CD8-positive, alpha-beta memory T cell (primary cell): ENCODE measurements at regions of chr16 and their contacts with region 1.

Region 1: DNA sequence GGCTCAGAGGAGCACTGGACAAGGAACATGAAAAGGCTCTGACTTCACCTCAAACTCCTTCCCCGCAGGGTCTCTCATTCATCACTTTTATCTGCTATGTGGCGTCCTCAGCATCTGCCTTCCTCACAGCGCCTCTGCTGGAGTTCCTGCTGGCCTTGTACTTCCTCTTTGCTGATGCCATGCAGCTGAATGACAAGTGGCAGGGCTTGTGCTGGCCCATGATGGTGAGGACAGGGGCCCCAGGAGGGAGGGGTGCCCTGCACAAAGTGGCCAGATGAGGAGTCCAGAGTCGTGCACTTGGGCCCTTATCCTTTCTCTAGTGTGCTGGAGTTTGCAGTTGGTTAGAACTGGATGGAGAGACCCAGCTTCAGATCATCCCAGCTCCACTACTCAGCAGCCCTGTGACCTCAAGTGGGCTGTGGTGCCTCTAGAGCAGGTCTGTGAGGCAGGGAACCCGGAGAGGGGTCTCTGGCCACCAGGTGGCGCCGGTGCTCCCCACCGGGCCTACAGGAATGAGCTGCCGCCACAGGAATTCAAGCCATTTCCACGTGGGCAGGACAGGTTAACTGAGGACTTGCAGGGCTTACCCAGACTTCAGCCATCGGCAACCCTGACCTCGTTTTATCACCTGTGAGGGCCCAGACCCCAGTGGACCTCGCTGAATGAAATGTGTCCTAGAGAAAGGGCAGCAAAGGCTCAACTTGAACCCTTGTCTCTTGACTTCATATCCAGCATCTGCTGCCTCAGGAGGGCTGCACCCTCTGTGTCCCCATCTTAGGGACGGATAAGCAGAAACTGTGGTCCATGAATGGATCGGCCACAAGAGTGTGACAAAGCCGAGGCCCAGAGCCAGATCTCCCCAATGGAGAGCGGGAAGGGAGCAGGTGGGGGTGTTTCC is 4.0 kb downstream of the CMTM3 start:
- DNase-seq: peak; percentile 69 to 85 (median 74)
- H3K4me3 ChIP-seq: no peak overlapping the region
- H3K4me3 Mint-ChIP-seq: peak overlapping the region in 4 of 7 donors; percentile 42 to 67 (median 45)
- H3K27ac ChIP-seq: no peak overlapping the region
- H3K27ac Mint-ChIP-seq: peak overlapping the region; percentile 30 to 93 (median 72)
- H3K4me1 ChIP-seq: peaks cover 33% of the 10 kb centered on the region
- H3K4me1 Mint-ChIP-seq: peaks cover 31 to 43% (median 33%) of the 10 kb centered on the region in 3 donors
- H3K27me3 ChIP-seq: no peaks in the 10 kb centered on the region
- H3K27me3 Mint-ChIP-seq: peaks cover 0 to 1% of the 10 kb centered on the region in 2 donors

Region 2: GRCh38 chr16:66406534-66407221 is 201.8 kb before region 1 on chr16:
- CTCF ChIA-PET with region 1: interaction called, 26 read pairs
- POLR2A ChIA-PET with region 1: interaction called, 3 read pairs
- DNase-seq: peak; percentile 74 to 89 (median 82)
- H3K4me3 ChIP-seq: peak overlapping the region; percentile 75
- H3K4me3 Mint-ChIP-seq: peak overlapping the region; percentile 81 to 93 (median 85)
- H3K27ac ChIP-seq: no peak overlapping the region
- H3K27ac Mint-ChIP-seq: peak overlapping the region in 4 of 8 donors; percentile 29 to 76 (median 64)
- H3K4me1 ChIP-seq: peaks cover 21% of the 10 kb centered on the region
- H3K4me1 Mint-ChIP-seq: peaks cover 25 to 29% (median 28%) of the 10 kb centered on the region in 3 donors
- H3K27me3 ChIP-seq: no peaks in the 10 kb centered on the region
- H3K27me3 Mint-ChIP-seq: peaks cover 0 to 12% of the 10 kb centered on the region in 2 donors

Region 3: GRCh38 chr16:66521951-66522771 is 86.3 kb before region 1 on chr16:
- CTCF ChIA-PET with region 1: interaction called, 11 read pairs
- POLR2A ChIA-PET with region 1: interaction called, 13 read pairs
- DNase-seq: peak; percentile 43 to 94 (median 69)
- H3K4me3 ChIP-seq: peak overlapping the region; percentile 41
- H3K4me3 Mint-ChIP-seq: peak overlapping the region; percentile 73 to 89 (median 82)
- H3K27ac ChIP-seq: peak overlapping the region; percentile 59
- H3K27ac Mint-ChIP-seq: peak overlapping the region; percentile 95 to 100 (median 96)
- H3K4me1 ChIP-seq: peaks cover 78% of the 10 kb centered on the region
- H3K4me1 Mint-ChIP-seq: peaks cover 84 to 93% (median 86%) of the 10 kb centered on the region in 3 donors
- H3K27me3 ChIP-seq: no peaks in the 10 kb centered on the region
- H3K27me3 Mint-ChIP-seq: no peaks in the 10 kb centered on the region

Region 4: DNA sequence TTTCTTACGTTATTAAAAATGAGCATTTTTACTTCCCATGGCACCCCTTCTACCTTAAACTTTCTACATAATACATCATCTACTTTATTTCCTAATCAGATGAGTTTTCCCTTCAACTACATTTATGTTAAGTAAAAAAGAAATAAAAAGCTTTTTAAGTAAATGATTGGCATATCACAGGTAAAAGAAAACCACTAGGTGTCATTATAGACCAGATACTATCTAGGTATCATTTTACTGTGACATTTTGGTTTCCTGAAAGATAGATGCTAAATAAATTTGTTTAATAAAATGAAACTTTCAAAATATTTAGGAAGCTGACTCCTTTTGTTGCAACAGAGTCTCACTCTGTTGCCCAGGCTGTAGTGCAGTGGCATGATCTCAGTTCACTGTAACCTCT is 46.1 kb before region 1 on chr16:
- CTCF ChIA-PET with region 1: interaction called, 14 read pairs
- POLR2A ChIA-PET with region 1: interaction called, 5 read pairs
- DNase-seq: peak in 2 of 5 donors; percentile 16 to 27
- H3K4me3 ChIP-seq: no peak overlapping the region
- H3K4me3 Mint-ChIP-seq: peak overlapping the region; percentile 3 to 71 (median 48)
- H3K27ac ChIP-seq: no peak overlapping the region
- H3K27ac Mint-ChIP-seq: peak overlapping the region; percentile 13 to 91 (median 74)
- H3K4me1 ChIP-seq: peaks cover 38% of the 10 kb centered on the region
- H3K4me1 Mint-ChIP-seq: peaks cover 70 to 79% (median 78%) of the 10 kb centered on the region in 3 donors
- H3K27me3 ChIP-seq: no peaks in the 10 kb centered on the region
- H3K27me3 Mint-ChIP-seq: no peaks in the 10 kb centered on the region

Region 5: DNA sequence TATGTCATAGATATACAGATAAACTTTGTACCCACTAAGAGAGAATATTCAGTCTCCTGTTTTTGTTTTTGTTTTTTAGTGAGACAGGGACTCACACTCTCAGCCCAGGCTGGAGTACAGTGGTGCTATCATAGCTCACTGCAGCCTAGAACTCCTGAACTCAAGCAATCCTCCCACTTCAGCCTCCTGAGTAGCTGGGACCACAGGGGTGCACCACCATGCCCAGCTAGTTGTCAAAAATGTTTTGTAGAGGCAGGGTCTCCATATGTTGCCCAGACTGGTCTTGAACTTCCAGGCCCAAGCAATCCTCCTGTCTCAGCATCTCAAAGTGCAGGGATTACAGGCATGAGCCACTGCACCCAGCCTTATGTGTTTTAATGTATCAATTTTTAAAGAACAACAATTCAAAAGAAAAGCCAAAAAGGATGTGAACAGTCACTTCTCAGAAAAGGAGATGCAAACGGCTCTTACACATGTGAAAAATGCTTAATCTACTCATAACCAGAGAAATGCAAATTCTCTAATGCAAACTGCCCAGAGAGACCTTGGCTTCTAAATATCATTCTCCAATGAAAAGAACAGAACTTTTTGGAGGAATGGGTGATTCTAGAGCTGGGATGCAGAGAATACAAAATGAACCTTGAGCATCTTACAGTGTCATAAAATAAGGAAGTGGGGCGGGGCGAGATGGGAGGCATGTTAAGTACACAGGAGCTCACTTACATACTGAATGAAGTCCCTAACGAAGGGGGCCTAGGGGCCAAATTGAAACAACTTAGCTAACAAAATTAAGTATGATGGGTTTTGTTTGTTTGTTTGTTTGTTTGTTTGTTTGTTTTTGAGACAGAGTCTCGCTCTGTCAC is 11.3 kb before region 1 on chr16:
- CTCF ChIA-PET with region 1: interaction called, 23 read pairs
- POLR2A ChIA-PET with region 1: no interaction called
- DNase-seq: no peak
- H3K4me3 ChIP-seq: no peak overlapping the region
- H3K4me3 Mint-ChIP-seq: no peak overlapping the region
- H3K27ac ChIP-seq: no peak overlapping the region
- H3K27ac Mint-ChIP-seq: peak overlapping the region in 7 of 8 donors; percentile 11 to 92 (median 33)
- H3K4me1 ChIP-seq: peaks cover 8% of the 10 kb centered on the region
- H3K4me1 Mint-ChIP-seq: peaks cover 10 to 25% (median 15%) of the 10 kb centered on the region in 3 donors
- H3K27me3 ChIP-seq: no peaks in the 10 kb centered on the region
- H3K27me3 Mint-ChIP-seq: no peaks in the 10 kb centered on the region

Region 6: GRCh38 chr16:66650707-66651473 is 42.4 kb after region 1 on chr16:
- CTCF ChIA-PET with region 1: interaction called, 21 read pairs
- POLR2A ChIA-PET with region 1: no interaction called
- DNase-seq: peak; percentile 63 to 86 (median 71)
- H3K4me3 ChIP-seq: peak overlapping the region; percentile 45
- H3K4me3 Mint-ChIP-seq: peak overlapping the region in 6 of 7 donors; percentile 66 to 79 (median 72)
- H3K27ac ChIP-seq: no peak overlapping the region
- H3K27ac Mint-ChIP-seq: peak overlapping the region in 4 of 8 donors; percentile 48 to 69 (median 60)
- H3K4me1 ChIP-seq: peaks cover 9% of the 10 kb centered on the region
- H3K4me1 Mint-ChIP-seq: peaks cover 8 to 15% (median 8%) of the 10 kb centered on the region in 3 donors
- H3K27me3 ChIP-seq: no peaks in the 10 kb centered on the region
- H3K27me3 Mint-ChIP-seq: peaks cover 10 to 14% of the 10 kb centered on the region in 2 donors